ENCODE measurements at regions of chr10 and their contacts with region 1.

Region 1: GRCh38 chr10:70363971-70364771 is 18.3 kb downstream of the LRRC20 start:
- DNase-seq: peak; percentile 97
- H3K4me3 ChIP-seq: peak overlapping the region; percentile 35
- H3K27ac ChIP-seq: peak overlapping the region; percentile 98
- H3K27me3 ChIP-seq: no peaks in the 10 kb centered on the region
- CTCF ChIP-seq: peak; percentile 94

Region 2: DNA sequence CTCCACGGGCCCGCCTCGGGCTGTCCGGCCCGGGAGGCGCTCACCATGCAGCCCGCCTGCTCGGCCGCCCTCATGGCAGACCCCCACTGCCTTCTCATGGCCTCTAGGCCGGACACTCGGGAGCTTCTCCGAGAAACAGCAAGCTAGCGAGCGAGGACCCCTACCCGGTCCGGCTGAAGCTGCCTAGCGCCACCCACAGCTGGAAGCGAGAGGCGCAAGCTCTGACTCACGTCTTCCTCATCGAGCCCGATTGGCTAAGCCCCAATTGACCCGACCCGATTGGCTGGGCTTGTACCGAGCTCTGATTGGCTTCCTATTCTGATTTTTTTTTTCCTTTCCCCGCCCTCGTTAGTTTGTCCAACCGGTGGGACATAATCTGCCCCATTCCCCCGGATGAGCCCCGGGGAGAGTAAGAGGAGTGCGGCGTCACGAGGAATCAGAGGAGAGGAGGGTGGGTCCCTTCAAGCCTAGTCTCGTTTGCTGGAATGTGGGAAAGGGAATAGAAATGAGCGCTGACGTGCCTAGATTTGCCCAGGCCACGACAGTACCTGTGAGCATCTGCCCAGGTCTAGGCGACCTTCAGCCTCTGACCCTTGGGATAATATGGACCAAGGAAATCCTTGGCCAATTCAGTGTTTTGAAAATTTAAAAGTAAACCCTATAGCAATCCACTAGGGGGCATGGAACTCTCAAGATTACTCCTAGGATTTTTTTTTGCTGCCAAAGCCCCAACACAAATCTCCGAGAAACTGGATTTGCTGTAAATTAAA is 217.5 kb before region 1 on chr10 and contains the start of gene TYSND1:
- CTCF ChIA-PET with region 1: interaction called, 32 read pairs
- POLR2A ChIA-PET with region 1: interaction called, 14 read pairs
- DNase-seq: peak; percentile 96
- H3K4me3 ChIP-seq: peak within 1 kb of the TSS; percentile 68
- H3K27ac ChIP-seq: peak within 1 kb of the TSS; percentile 95
- H3K27me3 ChIP-seq: no peaks in the 10 kb centered on the region
- CTCF ChIP-seq: peak; percentile 76
- polyA plus RNA-seq, gene TYSND1: 2.7 and 3.4 TPM in 2 replicates

Region 3: GRCh38 chr10:70221030-70221429 is 143.1 kb before region 1 on chr10:
- CTCF ChIA-PET with region 1: interaction called, 300 read pairs
- POLR2A ChIA-PET with region 1: interaction called, 10 read pairs
- DNase-seq: no peak
- H3K4me3 ChIP-seq: no peak overlapping the region
- H3K27ac ChIP-seq: no peak overlapping the region
- H3K27me3 ChIP-seq: no peaks in the 10 kb centered on the region
- CTCF ChIP-seq: no peak

Region 4: GRCh38 chr10:70233109-70233938 is 130.8 kb before region 1 on chr10 and contains the start of gene PPA1:
- CTCF ChIA-PET with region 1: interaction called, 46 read pairs
- POLR2A ChIA-PET with region 1: interaction called, 15 read pairs
- DNase-seq: peak; percentile 78
- H3K4me3 ChIP-seq: peak within 1 kb of the TSS; percentile 81
- H3K27ac ChIP-seq: peak within 1 kb of the TSS; percentile 47
- H3K27me3 ChIP-seq: no peaks in the 10 kb centered on the region
- CTCF ChIP-seq: peak; percentile 20; the same call in 1 of the 2 replicates
- polyA plus RNA-seq, gene PPA1: 148 and 227 TPM in 2 replicates

Region 5: GRCh38 chr10:70343312-70343711 is 20.9 kb before region 1 on chr10:
- CTCF ChIA-PET with region 1: interaction called, 11 read pairs
- POLR2A ChIA-PET with region 1: no interaction called
- DNase-seq: no peak
- H3K4me3 ChIP-seq: no peak overlapping the region
- H3K27ac ChIP-seq: no peak overlapping the region
- H3K27me3 ChIP-seq: no peaks in the 10 kb centered on the region
- CTCF ChIP-seq: no peak